ENCODE measurements at regions of chr5 and their contacts with region 1.

Region 1: GRCh38 chr5:141976176-141976575 is 7.3 kb downstream of the RNF14 start:
- DNase-seq: no peak
- H3K4me3 ChIP-seq: no peak overlapping the region
- H3K27ac ChIP-seq: no peak overlapping the region
- H3K4me1 ChIP-seq: peaks cover 2% of the 10 kb centered on the region
- CTCF ChIP-seq: no peak

Region 2: DNA sequence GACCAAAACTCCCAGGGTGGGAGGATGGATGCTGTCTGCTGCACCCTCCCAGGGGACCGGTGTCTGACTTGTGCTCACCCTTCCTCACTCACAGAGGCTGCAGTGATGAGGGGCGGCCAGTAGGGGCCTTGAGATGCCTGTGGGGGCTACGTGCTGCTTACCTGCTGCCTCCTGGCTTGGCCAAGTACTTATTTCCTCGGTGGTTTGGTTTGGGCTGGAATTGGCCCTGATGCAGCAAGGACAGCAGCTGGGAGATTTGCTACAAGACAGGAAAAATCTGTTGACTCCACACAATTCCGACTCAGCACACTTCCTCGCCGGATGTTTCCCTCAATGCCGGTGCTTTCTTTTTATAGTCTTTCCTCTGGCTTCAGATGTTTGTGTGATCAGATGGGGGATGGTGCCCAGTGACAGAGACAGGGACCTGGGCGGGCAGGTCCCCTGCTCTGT is 24.8 kb before region 1 on chr5:
- CTCF ChIA-PET with region 1: no interaction called
- POLR2A ChIA-PET with region 1: no interaction called
- intact Hi-C with region 1: no loop called
- DNase-seq: peak; percentile 66
- H3K4me3 ChIP-seq: no peak overlapping the region
- H3K27ac ChIP-seq: no peak overlapping the region
- H3K4me1 ChIP-seq: peaks cover 14% of the 10 kb centered on the region
- CTCF ChIP-seq: peak; percentile 79

Region 3: GRCh38 chr5:142012792-142013388 is 36.7 kb after region 1 on chr5 and contains the start of gene GNPDA1:
- CTCF ChIA-PET with region 1: interaction called, 3 read pairs
- POLR2A ChIA-PET with region 1: interaction called, 12 read pairs
- intact Hi-C with region 1: no loop called
- DNase-seq: peak; percentile 84
- H3K4me3 ChIP-seq: peak within 1 kb of the TSS; percentile 87
- H3K27ac ChIP-seq: peak within 1 kb of the TSS; percentile 45
- H3K4me1 ChIP-seq: peaks cover 44% of the 10 kb centered on the region
- CTCF ChIP-seq: peak; percentile 28; the same call in 1 of the 2 replicates
- total RNA-seq, gene GNPDA1: 20.2 and 22.9 TPM in 2 replicates

Measured in OCI-LY7 (cell line).